ENCODE measurements at regions of chr9 and their contacts with region 1.

Region 1: DNA sequence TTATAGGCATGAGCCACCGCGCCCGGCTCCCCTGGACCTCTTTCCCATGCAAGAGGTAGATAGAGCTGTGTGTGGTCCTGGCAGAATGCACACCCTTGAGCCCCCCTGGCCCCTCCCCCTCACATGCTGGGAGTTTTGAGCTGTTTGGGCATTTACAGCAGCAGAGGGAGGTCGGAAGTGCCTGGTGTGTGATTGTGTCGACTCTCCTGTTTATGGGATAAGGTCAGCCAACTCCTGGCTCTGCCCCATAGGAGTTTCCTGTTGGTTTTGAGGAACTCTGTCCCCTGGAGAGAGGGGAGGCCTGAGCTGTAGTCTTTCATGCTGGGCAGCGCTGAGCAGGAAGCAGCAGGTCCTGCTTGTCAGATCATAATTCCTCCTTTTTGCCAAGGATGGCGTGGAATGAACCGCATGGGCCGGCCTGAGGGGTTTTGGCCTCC is 6.0 kb downstream of the LRRC8A start:
- DNase-seq: no peak
- H3K4me3 ChIP-seq: peak overlapping the region in 1 of 4 donors; percentile 16
- H3K27ac ChIP-seq: peak overlapping the region in 4 of 5 donors; percentile 3 to 64 (median 54)
- H3K4me1 ChIP-seq: peaks cover 71 to 91% (median 81%) of the 10 kb centered on the region in 4 donors
- H3K27me3 ChIP-seq: no peaks in the 10 kb centered on the region
- CTCF ChIP-seq: no peak
- EP300 ChIP-seq: no peak
- POLR2A ChIP-seq: no peak

Region 2: DNA sequence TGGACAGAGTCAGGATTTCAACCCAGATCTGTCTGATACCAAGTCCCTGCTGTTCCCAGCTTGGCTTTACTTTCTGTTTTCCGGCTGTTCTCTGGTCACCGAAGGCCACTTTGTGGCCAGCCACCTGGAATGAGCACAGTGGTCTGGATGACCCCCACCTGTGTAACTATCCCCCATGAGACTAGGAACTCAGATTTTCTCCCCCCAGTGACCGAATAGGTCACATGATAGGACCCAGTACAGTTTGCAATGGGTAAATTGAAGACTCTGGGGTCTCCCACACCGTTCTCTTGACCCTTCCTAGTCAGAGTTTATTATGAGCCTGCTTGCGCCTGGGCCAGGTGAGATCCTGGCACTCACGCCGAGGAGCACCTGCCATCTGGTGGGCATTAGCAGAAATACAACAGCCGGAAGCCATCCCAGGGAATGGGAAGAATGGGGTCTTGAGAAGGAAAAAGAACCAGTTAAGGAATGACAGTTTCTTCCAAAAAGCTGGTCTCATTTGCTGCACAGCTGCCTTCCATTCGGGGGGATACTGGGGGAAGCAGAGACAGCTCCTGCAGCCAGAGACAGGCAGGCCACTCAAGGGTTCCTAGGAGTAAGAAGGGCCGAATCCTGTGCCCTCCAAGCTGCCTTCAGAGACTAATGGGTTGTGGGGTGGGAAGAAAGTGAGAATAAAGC is 39.9 kb after region 1 on chr9:
- intact Hi-C with region 1: loop called (anchors 5 kb)
- DNase-seq: peak; percentile 67 to 80
- H3K4me3 ChIP-seq: no peak overlapping the region
- H3K27ac ChIP-seq: peak overlapping the region in 2 of 5 donors; percentile 26 to 39
- H3K4me1 ChIP-seq: peaks cover 0 to 25% (median 19%) of the 10 kb centered on the region in 4 donors
- H3K27me3 ChIP-seq: no peaks in the 10 kb centered on the region
- CTCF ChIP-seq: peak in 5 of 7 experiments; percentile 83 to 95 (median 86)
- EP300 ChIP-seq: no peak
- POLR2A ChIP-seq: no peak